Lower lobe of right lung (tissue), 2 donors: ENCODE measurements at regions of chr7 and their contacts with region 1.

Region 1: GRCh38 chr7:121547544-121548092 is 151.5 kb upstream of the FAM3C start:
- DNase-seq: no peak
- ATAC-seq: peak; percentile 81 to 86
- H3K4me3 ChIP-seq: no peak overlapping the region
- H3K27ac ChIP-seq: no peak overlapping the region
- H3K4me1 ChIP-seq: peaks cover 5% of the 10 kb centered on the region
- H3K27me3 ChIP-seq: no peaks in the 10 kb centered on the region
- CTCF ChIP-seq: peak; percentile 79

Region 2: GRCh38 chr7:121366852-121367431 is 180.7 kb before region 1 on chr7:
- intact Hi-C with region 1: loop called (anchors 5 kb)
- DNase-seq: no peak
- ATAC-seq: no peak
- H3K4me3 ChIP-seq: no peak overlapping the region
- H3K27ac ChIP-seq: no peak overlapping the region
- H3K4me1 ChIP-seq: peaks cover 6% of the 10 kb centered on the region
- H3K27me3 ChIP-seq: no peaks in the 10 kb centered on the region
- CTCF ChIP-seq: peak; percentile 78

Region 3: DNA sequence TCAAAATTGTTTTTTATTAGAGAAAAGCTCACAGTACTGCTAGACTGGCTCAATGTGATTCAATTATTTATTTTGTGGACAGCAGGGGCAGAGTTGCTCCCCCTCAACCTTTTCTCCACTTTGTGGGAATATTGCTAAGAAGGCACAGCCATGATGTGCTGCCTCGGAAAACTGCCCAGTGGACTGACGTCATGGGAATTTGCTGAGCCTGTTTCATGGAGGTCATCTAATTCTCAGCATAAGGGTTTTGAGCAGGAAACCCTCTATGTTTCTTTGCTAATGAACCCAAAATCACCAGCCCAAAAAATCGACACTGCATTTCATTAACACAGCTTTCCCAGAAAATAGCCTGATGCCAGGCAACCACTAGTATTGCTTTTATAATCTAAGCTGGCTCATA is 77.3 kb after region 1 on chr7:
- intact Hi-C with region 1: no loop called
- DNase-seq: no peak
- ATAC-seq: no peak
- H3K4me3 ChIP-seq: no peak overlapping the region
- H3K27ac ChIP-seq: no peak overlapping the region
- H3K4me1 ChIP-seq: no peaks in the 10 kb centered on the region
- H3K27me3 ChIP-seq: no peaks in the 10 kb centered on the region
- CTCF ChIP-seq: no peak